ENCODE measurements at regions of chr15 and their contacts with region 1.

Region 1: DNA sequence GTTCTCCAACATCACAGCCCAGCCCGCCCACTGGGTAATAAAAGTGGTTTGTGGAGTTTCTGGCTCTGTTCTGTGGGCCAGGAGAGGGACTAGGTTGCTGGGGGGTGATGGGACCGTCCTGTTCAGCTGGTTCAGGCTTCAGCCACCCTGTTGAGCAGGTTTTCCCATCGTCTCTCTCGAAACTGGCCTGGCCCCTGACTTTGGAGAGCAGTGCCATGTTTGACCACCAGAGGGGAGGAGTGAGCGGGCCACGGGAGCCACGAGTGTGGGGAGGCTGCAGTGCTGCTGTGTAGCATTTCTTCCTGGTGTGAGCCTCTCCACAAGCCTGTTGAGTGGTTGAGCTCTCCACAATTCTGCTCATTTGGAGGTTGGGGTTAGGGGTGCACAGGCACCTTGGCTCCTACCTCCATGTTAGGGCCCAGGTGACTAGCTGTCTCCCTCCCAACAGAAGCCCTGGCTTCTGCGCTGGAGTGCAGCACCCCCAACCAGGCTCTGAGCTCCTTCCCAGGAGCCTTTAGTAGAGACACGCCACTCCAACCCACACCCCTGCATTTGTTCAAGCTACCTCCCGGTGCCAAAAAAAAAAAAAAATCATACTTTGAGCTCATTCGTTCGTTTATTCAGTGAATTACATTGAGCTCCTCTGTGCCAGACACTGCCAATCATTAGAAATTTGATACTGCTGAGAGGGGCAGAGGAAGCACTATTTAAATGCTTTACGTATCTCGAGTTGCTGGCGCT is 13.9 kb downstream of the SPINT1 start:
- DNase-seq: peak; percentile 87
- CTCF ChIP-seq: peak; percentile 96

Region 2: DNA sequence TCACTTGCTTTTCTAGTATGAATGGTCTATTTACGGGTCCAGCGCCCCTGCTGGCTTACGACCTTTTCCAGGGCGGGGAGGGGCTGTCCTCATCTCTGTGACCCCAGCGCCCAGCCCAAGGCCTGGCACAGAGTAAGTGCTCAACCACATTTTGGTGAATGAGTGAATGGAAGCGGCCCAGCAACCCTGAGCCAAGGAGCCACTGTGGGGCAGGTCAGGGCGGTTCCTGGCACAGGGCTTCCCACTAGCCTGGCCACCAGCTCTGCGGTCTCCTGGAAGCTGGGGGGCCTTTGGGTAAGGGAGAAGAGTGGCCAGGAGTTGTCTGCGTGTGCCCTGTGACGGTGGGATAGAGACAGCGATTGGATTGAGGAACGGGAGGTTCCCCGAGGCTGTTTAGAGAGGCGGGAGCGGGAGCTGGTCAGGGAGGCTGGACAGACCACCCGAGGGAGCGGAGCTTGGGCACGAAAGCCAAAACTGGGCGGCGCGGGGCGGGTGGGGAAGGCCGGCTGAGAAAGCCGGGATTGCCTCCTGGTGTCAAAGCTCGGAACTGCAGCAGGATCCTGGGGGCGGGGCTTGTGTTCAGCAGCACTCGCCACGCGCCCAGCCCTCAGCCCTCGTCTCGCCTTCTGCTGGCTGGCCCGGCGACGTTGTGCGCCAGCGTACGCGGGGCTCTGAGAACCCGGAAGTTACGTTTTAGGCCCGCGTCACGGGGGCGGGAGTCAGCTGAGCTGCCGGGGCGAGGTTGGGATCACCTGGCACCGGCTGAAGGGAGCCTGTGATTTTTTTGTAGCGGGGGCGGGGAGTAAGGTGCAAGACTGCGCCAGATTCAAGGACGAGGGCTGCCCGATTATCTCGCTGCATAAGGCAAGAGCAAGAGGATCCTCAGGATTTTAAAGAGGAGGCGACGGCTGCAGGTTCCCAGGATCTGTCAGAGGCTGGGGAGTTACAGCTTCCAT is 36.2 kb after region 1 on chr15 and contains the start of gene VPS18:
- in situ Hi-C with region 1: loop called (anchors 5 kb)
- DNase-seq: peak; percentile 94
- CTCF ChIP-seq: peak; percentile 95